CD4-positive, alpha-beta memory T cell (primary cell): ENCODE measurements at regions of chr22 and their contacts with region 1.

Region 1: DNA sequence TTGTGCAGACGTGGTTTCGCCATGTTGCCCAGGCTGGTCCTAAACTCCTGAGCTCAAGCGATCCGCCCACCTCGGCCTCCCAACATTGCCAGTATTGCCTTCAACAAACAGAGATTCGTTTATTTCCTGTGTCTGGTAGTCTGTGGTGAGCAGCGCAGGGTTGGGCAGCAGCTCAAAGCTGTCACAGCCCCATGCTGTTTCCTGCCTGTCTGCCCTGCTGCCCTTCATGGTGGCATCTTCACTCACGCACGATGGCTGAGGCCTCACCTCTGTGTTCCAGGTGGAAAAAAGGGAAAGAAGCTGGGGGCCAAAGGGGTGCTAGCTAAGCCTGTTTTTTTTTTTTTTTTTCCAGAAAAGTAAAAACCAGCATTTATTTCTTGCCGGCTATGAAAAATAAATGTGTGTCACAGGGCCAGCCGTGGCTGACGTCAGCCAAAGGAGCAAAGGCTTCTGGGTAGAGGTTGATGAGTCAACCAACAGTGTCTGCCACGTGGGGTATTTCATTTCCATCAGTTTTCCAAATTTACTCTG is 28.8 kb downstream of the TBC1D22A start:
- DNase-seq: peak; percentile 83 to 96 (median 87)
- H3K4me3 ChIP-seq: peak overlapping the region in 1 of 2 donors; percentile 45
- H3K4me3 Mint-ChIP-seq: peak overlapping the region; percentile 80 to 91 (median 86)
- H3K27ac ChIP-seq: peak overlapping the region; percentile 87
- H3K27ac Mint-ChIP-seq: peak overlapping the region; percentile 99 to 100 (median 100)
- H3K4me1 ChIP-seq: peaks cover 56% of the 10 kb centered on the region
- H3K4me1 Mint-ChIP-seq: peaks cover 33 to 61% (median 43%) of the 10 kb centered on the region in 4 donors
- H3K27me3 ChIP-seq: no peaks in the 10 kb centered on the region
- H3K27me3 Mint-ChIP-seq: no peaks in the 10 kb centered on the region

Region 2: DNA sequence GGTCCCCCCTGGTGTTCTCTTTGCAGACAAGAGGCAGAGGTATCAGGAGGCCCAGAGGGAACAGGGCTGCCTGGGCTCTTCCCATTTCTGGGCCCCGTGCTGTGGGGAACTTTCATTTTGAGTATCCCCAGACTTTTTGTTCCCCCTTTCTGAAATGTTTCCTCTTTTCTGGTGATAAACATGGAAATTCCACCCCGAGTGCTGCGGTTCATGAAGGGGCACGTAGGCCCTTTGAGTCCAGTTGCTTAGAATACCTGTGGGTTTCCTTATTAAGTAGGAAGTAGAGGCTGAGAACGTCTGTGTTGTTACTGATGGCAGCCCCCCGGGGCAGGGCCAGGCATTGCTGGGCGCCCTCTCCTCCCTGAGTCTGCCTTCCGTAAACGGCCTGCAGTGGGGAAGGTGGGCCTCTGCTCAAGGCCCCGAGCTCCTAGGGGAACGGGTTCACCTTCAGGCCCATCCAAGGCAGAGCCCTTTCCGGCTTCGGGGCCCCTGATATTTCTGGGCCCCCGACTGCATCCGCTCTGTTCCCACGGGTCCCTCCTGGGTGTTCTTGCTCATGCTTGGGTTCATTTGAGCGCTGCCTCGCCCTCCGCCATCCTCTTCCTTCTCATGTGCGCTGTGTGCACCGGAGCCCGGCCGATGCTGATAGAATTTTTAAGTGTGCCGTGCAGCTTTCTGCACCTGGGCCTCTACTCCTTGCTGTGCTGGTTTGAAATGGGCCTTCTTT is 16.9 kb before region 1 on chr22:
- CTCF ChIA-PET with region 1: interaction called, 3 read pairs
- POLR2A ChIA-PET with region 1: interaction called, 23 read pairs
- intact Hi-C with region 1: loop called (anchors 2 kb)
- DNase-seq: peak in 3 of 5 donors; percentile 34 to 50 (median 34)
- H3K4me3 ChIP-seq: peak overlapping the region in 1 of 2 donors; percentile 32
- H3K4me3 Mint-ChIP-seq: peak overlapping the region; percentile 62 to 87 (median 76)
- H3K27ac ChIP-seq: peak overlapping the region; percentile 73
- H3K27ac Mint-ChIP-seq: peak overlapping the region; percentile 91 to 98 (median 93)
- H3K4me1 ChIP-seq: peaks cover 80% of the 10 kb centered on the region
- H3K4me1 Mint-ChIP-seq: peaks cover 57 to 83% (median 74%) of the 10 kb centered on the region in 4 donors
- H3K27me3 ChIP-seq: no peaks in the 10 kb centered on the region
- H3K27me3 Mint-ChIP-seq: no peaks in the 10 kb centered on the region

Region 3: GRCh38 chr22:46810856-46811786 is 19.9 kb after region 1 on chr22:
- CTCF ChIA-PET with region 1: no interaction called
- POLR2A ChIA-PET with region 1: no interaction called
- intact Hi-C with region 1: no loop called
- DNase-seq: no peak
- H3K4me3 ChIP-seq: no peak overlapping the region
- H3K4me3 Mint-ChIP-seq: no peak overlapping the region
- H3K27ac ChIP-seq: no peak overlapping the region
- H3K27ac Mint-ChIP-seq: peak overlapping the region in 2 of 7 donors; percentile 49 to 74
- H3K4me1 ChIP-seq: peaks cover 8% of the 10 kb centered on the region
- H3K4me1 Mint-ChIP-seq: peaks cover 24 to 39% (median 32%) of the 10 kb centered on the region in 4 donors
- H3K27me3 ChIP-seq: no peaks in the 10 kb centered on the region
- H3K27me3 Mint-ChIP-seq: no peaks in the 10 kb centered on the region